ENCODE measurements at regions of chr2 and their contacts with region 1.

Region 1: GRCh38 chr2:169573160-169573973 is at the start of gene FASTKD1:
- DNase-seq: peak; percentile 71
- ATAC-seq: peak; percentile 99
- H3K4me3 Mint-ChIP-seq: peak within 1 kb of the TSS; percentile 98
- H3K27ac Mint-ChIP-seq: peak within 1 kb of the TSS; percentile 81
- H3K4me1 Mint-ChIP-seq: peaks cover 10% of the 10 kb centered on the region
- H3K27me3 Mint-ChIP-seq: no peaks in the 10 kb centered on the region
- CTCF ChIP-seq: no peak
- total RNA-seq, gene FASTKD1: 23.5 and 27.1 TPM in 2 replicates

Region 2: GRCh38 chr2:169363560-169364150 is 209.7 kb before region 1 on chr2:
- CTCF ChIA-PET with region 1: no interaction called
- POLR2A ChIA-PET with region 1: no interaction called
- intact Hi-C with region 1: loop called (anchors 10 kb)
- DNase-seq: peak; percentile 18
- ATAC-seq: peak; percentile 67
- H3K4me3 Mint-ChIP-seq: peak overlapping the region; percentile 88
- H3K27ac Mint-ChIP-seq: no peak overlapping the region
- H3K4me1 Mint-ChIP-seq: peaks cover 38% of the 10 kb centered on the region
- H3K27me3 Mint-ChIP-seq: peaks cover 41% of the 10 kb centered on the region
- CTCF ChIP-seq: no peak

Region 3: GRCh38 chr2:169462896-169463695 is 110.3 kb before region 1 on chr2:
- CTCF ChIA-PET with region 1: no interaction called
- POLR2A ChIA-PET with region 1: no interaction called
- intact Hi-C with region 1: no loop called
- DNase-seq: no peak
- ATAC-seq: no peak
- H3K4me3 Mint-ChIP-seq: no peak overlapping the region
- H3K27ac Mint-ChIP-seq: no peak overlapping the region
- H3K4me1 Mint-ChIP-seq: no peaks in the 10 kb centered on the region
- H3K27me3 Mint-ChIP-seq: no peaks in the 10 kb centered on the region
- CTCF ChIP-seq: no peak

Region 4: DNA sequence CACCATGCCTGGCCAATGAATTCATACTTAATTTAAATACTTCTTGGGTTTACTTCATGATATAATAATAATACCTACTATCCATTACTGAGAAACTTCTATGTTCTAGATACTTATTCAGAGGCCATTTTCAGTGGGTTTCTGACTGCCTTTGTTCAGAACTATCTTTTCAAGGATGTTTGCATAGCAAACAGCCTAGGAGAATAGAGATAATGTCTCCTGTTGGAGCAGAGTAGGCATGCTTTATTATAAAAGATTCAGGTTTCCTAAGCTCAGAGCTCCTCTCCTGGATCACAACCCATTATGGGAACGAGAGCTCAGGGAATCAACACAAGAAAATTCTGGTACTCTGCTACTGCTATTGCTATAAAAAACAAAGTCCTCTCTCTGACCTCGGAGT is 10.8 kb before region 1 on chr2:
- CTCF ChIA-PET with region 1: no interaction called
- POLR2A ChIA-PET with region 1: no interaction called
- intact Hi-C with region 1: loop called (anchors 1 kb)
- DNase-seq: no peak
- ATAC-seq: no peak
- H3K4me3 Mint-ChIP-seq: no peak overlapping the region
- H3K27ac Mint-ChIP-seq: no peak overlapping the region
- H3K4me1 Mint-ChIP-seq: no peaks in the 10 kb centered on the region
- H3K27me3 Mint-ChIP-seq: no peaks in the 10 kb centered on the region
- CTCF ChIP-seq: no peak

Region 5: DNA sequence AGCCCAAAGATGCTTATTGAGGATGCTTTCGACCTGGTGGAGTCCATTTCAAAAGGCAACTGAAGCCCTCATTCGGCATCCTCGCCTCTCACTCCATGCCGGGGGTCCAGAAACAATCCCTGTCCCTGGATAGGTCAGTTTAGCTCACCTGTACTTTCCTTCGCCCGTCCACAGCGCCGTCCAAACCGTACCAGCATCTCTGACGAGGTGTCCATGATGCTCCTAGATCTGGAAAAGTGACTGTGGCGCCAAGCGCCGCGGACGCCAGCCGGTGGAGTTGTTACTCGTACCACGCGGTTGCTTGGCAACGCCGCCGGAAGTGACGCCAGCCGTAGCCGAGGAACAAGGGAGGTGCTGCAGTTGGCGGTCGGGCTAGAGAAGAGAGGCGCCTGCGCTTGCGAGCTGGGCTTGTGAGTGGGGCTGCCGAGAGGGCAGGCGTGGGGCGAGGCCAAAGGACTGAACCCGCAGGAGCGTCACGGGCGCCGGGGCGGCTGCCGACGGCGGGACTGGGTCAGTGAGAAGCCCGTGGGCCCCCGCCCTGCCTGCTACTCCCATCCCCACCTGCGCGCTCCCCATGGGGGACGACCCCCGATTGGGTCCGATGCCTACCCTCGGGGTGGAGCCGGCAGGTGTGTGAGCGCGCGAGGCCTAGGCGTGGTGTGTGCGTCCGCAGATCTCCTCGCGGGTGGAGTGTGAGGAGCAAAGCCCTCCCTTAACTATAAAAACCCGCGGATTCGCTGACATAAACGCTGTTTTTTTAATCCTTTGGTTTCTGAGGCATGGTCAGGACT is 120.9 kb after region 1 on chr2 and contains the starts of genes CFAP210 and PHOSPHO2:
- CTCF ChIA-PET with region 1: no interaction called
- POLR2A ChIA-PET with region 1: no interaction called
- intact Hi-C with region 1: loop called (anchors 1 kb)
- DNase-seq: peak; percentile 98
- ATAC-seq: peak; percentile 97
- H3K4me3 Mint-ChIP-seq: peak within 1 kb of the TSS; percentile 91
- H3K27ac Mint-ChIP-seq: peak within 1 kb of the TSS; percentile 94
- H3K4me1 Mint-ChIP-seq: peaks cover 16% of the 10 kb centered on the region
- H3K27me3 Mint-ChIP-seq: peaks cover 2% of the 10 kb centered on the region
- CTCF ChIP-seq: no peak
- total RNA-seq, gene CFAP210: not detected in 2 replicates
- total RNA-seq, gene PHOSPHO2: 3.2 and 6.3 TPM in 2 replicates

Region 6: GRCh38 chr2:169824373-169825333 is 251.3 kb after region 1 on chr2 and contains the start of gene METTL5:
- CTCF ChIA-PET with region 1: no interaction called
- POLR2A ChIA-PET with region 1: interaction called, 3 read pairs
- intact Hi-C with region 1: loop called (anchors 1 kb)
- DNase-seq: peak; percentile 84
- ATAC-seq: peak; percentile 73
- H3K4me3 Mint-ChIP-seq: peak within 1 kb of the TSS; percentile 92
- H3K27ac Mint-ChIP-seq: peak within 1 kb of the TSS; percentile 85
- H3K4me1 Mint-ChIP-seq: peaks cover 51% of the 10 kb centered on the region
- H3K27me3 Mint-ChIP-seq: no peaks in the 10 kb centered on the region
- CTCF ChIP-seq: peak; percentile 40
- total RNA-seq, gene METTL5: 48.3 and 51.1 TPM in 2 replicates